ENCODE measurements at regions of chr15 and their contacts with region 1.

Region 1: GRCh38 chr15:79184465-79184892 is 93.9 kb upstream of the RASGRF1 start:
- DNase-seq: peak; percentile 75
- ATAC-seq: no peak

Region 2: DNA sequence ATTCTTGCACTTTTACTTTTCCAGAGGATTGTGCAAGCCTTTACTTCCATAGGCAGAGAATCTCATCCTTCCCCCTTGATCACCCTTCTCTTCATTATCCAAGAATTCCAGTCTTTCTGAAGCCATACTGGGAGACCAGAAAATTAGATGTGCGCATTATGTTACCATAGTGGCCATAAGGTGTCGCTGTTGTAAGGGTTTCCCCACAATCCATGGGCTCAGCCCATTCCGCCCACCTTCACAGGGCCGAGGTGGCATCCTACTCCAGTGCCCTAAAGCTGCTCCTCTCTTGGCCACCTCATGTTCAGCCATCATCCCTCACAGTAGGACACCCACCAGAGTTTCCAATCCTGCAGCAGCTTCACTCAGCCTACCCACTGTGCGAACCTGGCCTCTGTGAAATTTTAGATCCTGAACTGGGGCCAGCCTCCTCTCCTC is 274.7 kb before region 1 on chr15:
- intact Hi-C with region 1: loop called (anchors 2 kb)
- DNase-seq: no peak
- ATAC-seq: peak; percentile 35

Region 3: DNA sequence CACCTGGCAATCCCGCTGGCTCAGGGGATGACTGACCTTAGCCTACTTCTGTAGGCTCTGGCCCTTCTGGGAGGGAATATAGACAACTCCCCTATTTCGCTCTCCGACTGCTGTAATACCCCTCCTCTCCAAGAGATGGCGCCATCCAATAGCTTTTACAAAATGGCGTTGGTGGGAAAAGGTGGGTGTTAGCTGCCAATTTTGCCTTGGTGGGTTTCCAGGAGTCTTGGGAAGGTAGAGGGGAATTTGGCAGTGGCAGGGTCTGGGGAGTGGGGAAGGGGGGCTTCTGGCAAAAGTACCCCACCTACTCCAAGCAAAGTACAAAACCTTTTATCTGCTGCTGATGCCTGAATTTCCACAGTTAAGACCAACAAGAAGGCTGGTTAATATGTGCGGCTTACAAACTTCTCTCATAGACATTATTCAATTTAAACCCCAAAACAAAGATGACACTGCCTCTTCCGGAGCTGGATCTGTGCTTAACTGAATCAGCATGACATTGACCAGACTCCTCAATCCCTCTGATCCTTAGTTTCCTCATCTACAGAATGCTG is 156.0 kb before region 1 on chr15:
- intact Hi-C with region 1: loop called (anchors 1 kb)
- DNase-seq: no peak
- ATAC-seq: peak; percentile 26

Region 4: DNA sequence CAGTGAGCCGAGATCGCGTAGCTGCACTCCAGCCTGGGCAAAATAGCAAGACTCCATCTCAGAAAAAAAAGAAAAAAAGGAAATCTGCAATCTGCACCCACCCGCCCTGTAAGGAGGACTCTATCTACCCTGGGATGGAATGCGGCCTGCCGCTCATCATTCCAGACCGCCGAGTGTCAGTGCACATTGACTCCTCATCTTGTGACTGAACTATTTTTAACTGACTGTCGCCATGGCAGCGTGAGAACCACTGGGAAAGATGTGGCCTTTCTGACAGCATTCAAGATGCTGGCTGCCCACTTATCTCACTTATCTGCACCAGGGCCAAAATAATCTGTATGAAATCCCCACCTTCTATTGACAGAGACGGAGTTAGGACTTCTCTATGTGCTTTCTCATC is 59.2 kb after region 1 on chr15:
- intact Hi-C with region 1: loop called (anchors 10 kb)
- DNase-seq: no peak
- ATAC-seq: peak; percentile 80

Measured in Right ventricle myocardium inferior (tissue), 1 donor.